Left colon (tissue), 2 donors: ENCODE measurements at regions of chr1 and their contacts with region 1.

Region 1: DNA sequence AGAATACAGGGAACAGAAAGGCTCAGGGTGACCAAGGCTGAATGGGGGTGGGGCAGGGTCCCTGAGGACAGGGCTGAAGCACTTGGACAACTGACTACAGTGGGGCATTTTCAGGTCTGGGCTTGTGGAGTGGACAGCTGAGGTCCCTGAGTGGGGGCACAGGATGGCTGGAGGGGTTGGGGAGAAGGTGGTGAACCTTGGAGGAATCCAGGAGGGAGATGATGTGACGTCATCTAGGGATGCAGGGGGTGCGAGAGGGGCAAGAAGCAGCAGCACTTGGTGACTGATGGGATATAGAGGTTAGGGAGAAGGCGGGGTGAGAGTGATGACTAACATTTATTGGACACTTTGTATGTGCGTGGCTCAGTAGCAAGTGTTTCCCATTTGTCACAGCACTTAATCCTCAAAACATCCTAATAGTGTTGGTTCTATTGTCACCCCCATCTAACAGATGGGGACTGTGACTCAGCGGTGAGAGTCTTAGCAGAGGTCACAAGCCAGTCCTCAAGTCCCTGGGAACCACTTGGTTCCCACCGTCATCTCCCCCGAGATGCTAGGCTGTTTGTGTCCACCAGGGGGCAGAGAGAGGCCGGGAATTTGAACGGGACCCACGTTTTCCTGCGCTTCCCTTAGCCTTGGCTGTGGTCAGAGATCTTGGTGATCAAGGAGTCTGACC is 27.9 kb upstream of the BMP8B start:
- DNase-seq: peak; percentile 64 to 65
- ATAC-seq: peak; percentile 52

Region 2: DNA sequence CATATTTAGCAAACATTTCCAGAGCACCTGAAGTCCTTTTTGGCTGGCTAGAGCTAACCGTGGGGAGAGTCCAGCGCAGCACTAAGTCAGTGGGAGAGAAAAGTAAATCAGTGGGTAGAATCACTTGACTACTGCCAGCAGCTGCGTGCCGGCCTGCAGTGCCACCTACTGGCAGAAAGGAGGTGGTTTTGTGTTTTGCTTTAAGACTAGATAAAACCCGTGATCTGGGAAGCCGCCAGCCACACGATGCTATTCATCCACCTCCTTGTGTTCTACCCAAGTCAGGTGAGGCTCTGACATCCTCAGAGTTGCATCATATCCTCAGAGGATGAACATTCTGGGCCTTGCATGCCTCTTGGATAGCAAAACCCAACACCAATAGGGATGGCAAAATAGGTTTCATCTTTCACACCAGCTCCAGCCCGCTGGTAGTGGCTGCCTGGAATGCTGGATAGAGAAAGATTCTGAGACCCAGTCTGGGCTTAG is 163.0 kb before region 1 on chr1:
- intact Hi-C with region 1: no loop called
- DNase-seq: peak; percentile 62 to 82
- ATAC-seq: peak; percentile 85

Region 3: DNA sequence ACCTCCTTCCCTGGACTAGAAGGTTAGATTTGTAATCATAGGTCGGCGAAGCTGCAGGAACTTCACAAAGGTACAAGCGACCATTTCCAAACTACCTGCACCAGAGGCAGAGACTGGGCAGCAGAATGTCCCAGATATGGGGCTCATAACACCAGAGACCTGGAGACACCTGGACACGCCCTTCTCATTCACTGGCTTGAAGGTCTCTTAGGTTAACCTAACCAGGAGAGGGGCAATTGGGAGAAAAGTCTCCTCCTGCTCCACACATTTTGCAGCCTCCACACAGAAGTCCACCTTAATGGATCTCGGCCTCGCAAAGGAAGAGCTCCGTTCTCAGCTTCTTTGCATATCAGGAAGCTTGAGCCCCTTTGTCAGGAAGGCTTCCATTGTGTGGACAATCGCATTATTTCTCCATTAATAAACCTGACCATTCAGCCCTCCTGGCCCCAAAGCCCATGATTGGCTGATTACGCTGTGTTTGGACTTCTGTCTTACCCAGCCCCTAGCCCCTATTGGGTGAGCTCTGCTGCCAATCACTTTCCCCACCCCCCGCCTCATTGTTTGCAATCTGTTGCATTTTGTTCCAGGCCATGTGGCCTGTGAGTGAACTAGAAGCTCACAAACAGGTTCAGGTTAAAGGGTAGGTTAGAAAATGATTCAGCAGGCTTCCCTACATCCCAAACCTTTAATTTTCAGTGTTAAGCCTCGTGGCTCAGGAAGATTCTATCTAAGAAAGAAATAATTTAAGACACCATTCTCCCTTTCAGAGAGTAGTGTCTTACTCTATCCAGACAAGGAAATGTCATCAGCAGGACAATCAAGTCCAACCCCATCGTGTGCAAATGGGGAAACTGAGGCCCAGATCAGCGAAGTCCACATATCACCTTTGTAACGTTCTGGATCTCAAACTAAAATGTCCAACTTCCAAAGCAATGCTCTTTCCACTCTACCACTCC is 82.4 kb after region 1 on chr1:
- intact Hi-C with region 1: loop called in 1 of 2 experiments (anchors 10 kb)
- DNase-seq: peak; percentile 38 to 48
- ATAC-seq: no peak

Region 4: DNA sequence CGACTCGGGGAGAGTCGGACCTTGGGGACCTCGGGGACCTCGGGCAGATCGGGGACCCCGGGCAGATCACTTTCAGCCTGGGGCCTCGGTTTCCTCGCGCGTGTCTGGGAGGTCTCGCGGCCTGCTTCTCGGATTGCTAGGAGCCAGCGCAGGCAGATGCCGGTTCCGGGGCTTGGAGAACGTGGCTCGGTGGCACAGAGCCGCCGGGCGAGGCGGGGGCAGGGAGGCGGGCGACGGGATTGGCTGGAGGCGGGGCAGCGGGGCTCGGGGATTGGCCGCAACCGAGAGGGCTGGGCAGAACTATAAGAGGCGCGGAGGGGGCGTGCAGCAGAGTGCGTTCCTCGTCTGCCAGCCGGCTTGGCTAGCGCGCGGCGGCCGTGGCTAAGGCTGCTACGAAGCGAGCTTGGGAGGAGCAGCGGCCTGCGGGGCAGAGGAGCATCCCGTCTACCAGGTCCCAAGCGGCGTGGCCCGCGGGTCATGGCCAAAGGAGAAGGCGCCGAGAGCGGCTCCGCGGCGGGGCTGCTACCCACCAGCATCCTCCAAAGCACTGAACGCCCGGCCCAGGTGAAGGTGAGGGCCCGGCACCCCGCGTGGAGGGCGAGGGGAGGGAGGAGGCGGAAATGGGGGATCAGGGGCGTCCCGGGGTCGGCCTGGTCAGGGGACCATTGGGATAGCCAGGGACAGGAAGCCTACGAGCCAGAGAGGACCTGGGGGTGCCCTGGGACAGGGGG is 138.4 kb after region 1 on chr1 and contains the start of gene MFSD2A:
- intact Hi-C with region 1: loop called in 1 of 2 experiments (anchors 10 kb)
- DNase-seq: peak; percentile 95 to 96
- ATAC-seq: peak; percentile 90
- total RNA-seq, gene MFSD2A: 27.9 to 35.7 TPM

Region 5: GRCh38 chr1:39973503-39974135 is 157.1 kb after region 1 on chr1:
- intact Hi-C with region 1: loop called in 1 of 2 experiments (anchors 5 kb)
- DNase-seq: peak; percentile 70 to 84
- ATAC-seq: peak; percentile 72